Right cardiac atrium (tissue), 5 donors: ENCODE measurements at regions of chr9 and their contacts with region 1.

Region 1: GRCh38 chr9:124940693-124941453 is at the start of gene GOLGA1:
- DNase-seq: peak; percentile 97 to 99 (median 98)
- ATAC-seq: peak; percentile 98 to 99
- H3K4me3 ChIP-seq: peak within 1 kb of the TSS; percentile 70
- H3K27ac ChIP-seq: peak within 1 kb of the TSS; percentile 96
- H3K4me1 ChIP-seq: peaks cover 5% of the 10 kb centered on the region
- H3K27me3 ChIP-seq: no peaks in the 10 kb centered on the region
- total RNA-seq, gene GOLGA1: 17.9 to 20.0 (median 19.4) TPM

Region 2: GRCh38 chr9:124617471-124618141 is 323.3 kb before region 1 on chr9:
- intact Hi-C with region 1: no loop called
- DNase-seq: peak; percentile 72 to 87 (median 85)
- ATAC-seq: peak; percentile 86 to 87
- H3K4me3 ChIP-seq: no peak overlapping the region
- H3K27ac ChIP-seq: no peak overlapping the region
- H3K4me1 ChIP-seq: no peaks in the 10 kb centered on the region
- H3K27me3 ChIP-seq: no peaks in the 10 kb centered on the region

Region 3: DNA sequence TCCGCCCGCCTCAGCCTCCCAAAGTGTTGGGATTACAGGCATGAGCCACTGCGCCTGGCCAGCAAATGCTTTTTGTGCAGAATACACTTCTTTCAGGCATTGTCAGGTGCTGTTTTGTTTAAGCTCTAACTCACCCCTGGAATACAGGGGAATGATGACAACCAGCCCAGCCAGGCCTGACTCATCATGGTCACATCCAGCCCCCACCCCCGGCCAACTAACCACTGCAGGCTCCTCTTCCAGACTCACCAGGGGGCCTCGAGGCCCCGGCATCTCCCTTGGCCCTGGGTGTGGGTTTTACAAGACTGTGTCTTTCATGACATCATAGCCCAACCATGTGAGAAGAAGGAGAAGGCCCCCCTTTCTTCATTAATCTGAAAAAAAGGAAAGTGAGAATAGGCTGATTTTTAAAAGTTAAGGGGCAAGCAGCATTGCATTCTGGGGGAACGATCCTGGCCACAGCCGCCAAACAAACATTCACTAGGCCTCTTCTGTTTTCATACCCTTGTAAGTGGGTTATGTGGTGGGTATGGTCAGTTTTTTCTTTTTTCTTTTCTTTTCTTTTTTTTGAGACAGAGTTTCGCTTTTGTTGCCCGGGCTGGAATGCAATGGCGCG is 128.4 kb before region 1 on chr9:
- intact Hi-C with region 1: no loop called
- DNase-seq: peak in 2 of 3 donors; percentile 71 to 78
- ATAC-seq: peak in 1 of 2 donors; percentile 72
- H3K4me3 ChIP-seq: no peak overlapping the region
- H3K27ac ChIP-seq: peak overlapping the region; percentile 10
- H3K4me1 ChIP-seq: no peaks in the 10 kb centered on the region
- H3K27me3 ChIP-seq: no peaks in the 10 kb centered on the region

Region 4: DNA sequence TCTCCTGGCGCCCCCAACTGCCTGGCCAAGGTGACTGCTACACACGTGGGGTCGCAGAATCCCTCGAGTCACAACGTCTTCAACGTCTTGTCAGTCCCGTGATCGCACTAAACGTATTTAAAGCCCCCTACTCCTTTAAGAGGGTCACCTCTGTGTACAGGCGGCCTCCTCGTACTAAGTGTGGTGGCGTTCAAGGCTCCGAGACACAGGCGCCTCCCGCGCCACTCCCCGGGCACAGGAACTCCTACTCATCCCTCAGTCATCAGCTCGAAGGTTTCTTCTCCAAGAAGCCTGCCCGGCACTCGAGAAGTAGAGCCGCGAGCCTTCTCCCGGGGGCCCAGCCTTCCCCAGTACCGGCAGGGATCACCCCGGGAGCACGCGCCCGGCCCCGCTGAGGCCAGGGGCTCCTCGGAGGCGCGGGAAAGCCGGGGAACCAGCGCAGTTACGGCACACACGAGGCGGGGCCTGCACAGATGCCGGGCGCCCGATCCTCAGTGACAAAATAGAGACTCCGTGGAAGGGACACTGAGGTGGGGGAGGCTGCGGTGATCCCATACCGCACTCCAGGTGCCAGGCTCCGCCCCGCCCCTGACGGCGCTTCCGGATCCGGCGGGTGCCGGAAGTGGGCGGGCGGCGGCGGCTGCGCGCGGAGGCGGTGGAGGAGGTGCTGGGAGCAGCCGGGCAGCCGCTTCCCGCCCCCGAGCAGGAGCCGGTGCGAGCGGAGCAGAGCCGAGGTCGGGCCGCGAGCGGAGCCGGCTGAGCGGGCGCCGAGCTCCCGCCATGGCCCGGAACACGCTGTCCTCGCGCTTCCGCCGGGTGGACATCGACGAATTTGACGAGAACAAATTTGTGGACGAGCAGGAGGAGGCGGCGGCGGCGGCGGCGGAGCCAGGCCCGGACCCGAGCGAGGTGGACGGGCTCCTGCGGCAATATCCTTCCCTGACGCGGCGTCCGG is 72.1 kb before region 1 on chr9:
- intact Hi-C with region 1: no loop called
- DNase-seq: peak; percentile 90 to 96 (median 95)
- ATAC-seq: peak; percentile 94
- H3K4me3 ChIP-seq: peak overlapping the region; percentile 74
- H3K27ac ChIP-seq: peak overlapping the region; percentile 77
- H3K4me1 ChIP-seq: peaks cover 12% of the 10 kb centered on the region
- H3K27me3 ChIP-seq: no peaks in the 10 kb centered on the region

Region 5: DNA sequence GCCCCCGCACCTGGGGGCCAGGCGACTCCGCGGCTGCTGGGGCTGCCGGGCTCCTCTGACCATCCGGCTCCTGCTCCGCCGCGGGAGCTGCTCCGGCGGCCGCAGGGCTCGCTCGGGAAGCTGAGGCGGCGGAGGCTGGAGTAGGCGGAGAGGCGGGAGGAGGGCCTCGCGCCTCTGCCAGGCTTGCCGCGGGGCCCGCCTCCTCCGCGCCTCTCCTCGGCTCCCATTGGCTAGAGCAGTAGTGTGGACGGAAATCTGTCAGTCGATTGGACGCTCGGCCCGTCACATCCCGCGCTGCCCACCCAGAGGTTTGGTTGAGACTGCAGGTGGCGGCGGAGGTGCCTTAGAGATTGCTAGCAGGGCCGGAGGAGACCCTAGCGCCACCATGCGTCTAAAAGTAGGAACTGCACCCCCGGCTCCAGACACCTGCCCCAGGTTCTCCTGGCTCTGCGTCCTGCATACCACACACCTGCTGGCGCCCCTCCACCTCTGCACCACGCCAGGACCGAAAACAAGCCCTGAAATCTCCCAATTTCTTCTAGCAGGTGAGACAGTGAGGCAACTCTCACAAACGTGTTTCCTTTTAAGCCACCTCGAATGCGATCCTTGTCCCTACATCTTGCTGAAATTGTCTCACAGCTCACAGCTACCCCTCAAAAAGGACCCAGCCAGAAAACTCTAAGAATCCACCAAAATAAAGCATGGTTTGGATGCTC is 202.7 kb after region 1 on chr9 and contains the start of gene SCAI:
- intact Hi-C with region 1: loop called in 1 of 4 experiments (anchors 10 kb)
- DNase-seq: peak; percentile 99 to 100 (median 100)
- ATAC-seq: peak; percentile 100
- H3K4me3 ChIP-seq: peak within 1 kb of the TSS; percentile 93
- H3K27ac ChIP-seq: no peak within 1 kb of the TSS
- H3K4me1 ChIP-seq: no peaks in the 10 kb centered on the region
- H3K27me3 ChIP-seq: no peaks in the 10 kb centered on the region
- total RNA-seq, gene SCAI: 4.8 to 5.5 (median 4.9) TPM